ENCODE measurements at regions of chr4 and their contacts with region 1.

Region 1: DNA sequence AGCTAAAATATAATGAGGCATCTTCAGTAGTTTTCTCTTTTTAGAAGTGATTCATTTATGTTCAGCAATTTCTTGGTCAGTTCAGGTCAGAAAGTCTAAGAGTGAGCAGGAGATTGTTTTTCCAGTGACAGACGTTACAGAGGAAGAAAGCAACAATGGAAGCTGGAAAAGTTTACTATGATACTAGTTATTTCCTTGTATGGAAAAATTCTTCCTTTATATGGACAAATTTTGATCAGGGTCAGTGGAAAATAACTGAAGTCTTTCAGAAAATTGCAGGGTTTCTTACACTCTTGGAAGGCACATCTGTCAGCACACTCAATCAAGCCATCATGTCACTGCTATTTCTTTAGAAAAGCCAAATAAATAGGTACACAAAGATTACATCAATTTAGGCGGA is 1120.7 kb downstream of the FAT4 start:
- DNase-seq: no peak

Region 2: DNA sequence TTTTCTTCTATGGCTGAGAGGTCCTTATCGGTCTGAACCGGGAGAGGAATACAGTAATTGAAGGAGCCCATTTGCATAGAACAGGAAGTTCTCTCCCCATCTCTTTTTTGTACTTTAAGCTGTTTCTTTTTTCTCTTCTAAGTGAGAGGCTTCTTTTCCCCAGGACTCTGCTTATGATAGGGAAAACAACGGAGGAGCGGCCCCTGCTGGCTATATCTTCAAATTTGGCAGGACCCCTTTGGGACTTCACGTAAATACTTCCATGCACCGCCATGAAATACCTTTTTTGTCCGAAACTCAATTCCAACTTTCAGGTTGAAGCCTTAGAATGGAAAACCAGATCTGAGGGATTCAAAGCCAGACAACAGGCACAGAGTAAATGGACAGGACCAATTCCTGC is 44.2 kb after region 1 on chr4:
- intact Hi-C with region 1: loop called in 1 of 2 experiments (anchors 1 kb)
- DNase-seq: no peak

Measured in posterior vena cava (tissue), 2 donors.